CD4-positive, alpha-beta T cell (primary cell): ENCODE measurements at regions of chr15 and their contacts with region 1.

Region 1: DNA sequence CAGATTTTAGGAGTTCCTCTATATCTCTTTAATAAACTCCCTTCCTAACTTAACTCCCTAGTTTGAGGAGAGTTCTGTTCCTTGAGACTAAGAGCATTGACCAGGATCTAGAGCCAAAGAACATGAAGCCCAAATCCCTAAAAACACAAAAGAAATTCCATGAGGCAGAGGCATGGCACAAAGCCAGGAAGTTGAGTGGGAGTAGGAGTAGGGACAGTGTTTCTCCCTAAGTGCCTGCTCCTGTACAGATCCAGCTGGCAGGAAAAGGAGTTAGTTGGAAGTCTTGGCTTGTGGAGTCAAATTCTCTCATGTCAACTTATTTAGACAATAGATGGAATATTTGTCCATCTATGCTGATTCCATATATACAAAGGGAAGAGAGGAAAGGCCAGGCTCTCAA is 11.4 kb downstream of the ACTC1 start:
- DNase-seq: no peak
- ATAC-seq: no peak
- H3K4me3 ChIP-seq: no peak overlapping the region
- H3K4me3 Mint-ChIP-seq: no peak overlapping the region
- H3K27ac ChIP-seq: no peak overlapping the region
- H3K27ac Mint-ChIP-seq: no peak overlapping the region
- H3K4me1 ChIP-seq: no peaks in the 10 kb centered on the region
- H3K4me1 Mint-ChIP-seq: no peaks in the 10 kb centered on the region
- H3K27me3 ChIP-seq: peaks cover 3 to 14% of the 10 kb centered on the region in 2 experiments
- H3K27me3 Mint-ChIP-seq: peaks cover 52% of the 10 kb centered on the region
- CTCF ChIP-seq: no peak

Region 2: DNA sequence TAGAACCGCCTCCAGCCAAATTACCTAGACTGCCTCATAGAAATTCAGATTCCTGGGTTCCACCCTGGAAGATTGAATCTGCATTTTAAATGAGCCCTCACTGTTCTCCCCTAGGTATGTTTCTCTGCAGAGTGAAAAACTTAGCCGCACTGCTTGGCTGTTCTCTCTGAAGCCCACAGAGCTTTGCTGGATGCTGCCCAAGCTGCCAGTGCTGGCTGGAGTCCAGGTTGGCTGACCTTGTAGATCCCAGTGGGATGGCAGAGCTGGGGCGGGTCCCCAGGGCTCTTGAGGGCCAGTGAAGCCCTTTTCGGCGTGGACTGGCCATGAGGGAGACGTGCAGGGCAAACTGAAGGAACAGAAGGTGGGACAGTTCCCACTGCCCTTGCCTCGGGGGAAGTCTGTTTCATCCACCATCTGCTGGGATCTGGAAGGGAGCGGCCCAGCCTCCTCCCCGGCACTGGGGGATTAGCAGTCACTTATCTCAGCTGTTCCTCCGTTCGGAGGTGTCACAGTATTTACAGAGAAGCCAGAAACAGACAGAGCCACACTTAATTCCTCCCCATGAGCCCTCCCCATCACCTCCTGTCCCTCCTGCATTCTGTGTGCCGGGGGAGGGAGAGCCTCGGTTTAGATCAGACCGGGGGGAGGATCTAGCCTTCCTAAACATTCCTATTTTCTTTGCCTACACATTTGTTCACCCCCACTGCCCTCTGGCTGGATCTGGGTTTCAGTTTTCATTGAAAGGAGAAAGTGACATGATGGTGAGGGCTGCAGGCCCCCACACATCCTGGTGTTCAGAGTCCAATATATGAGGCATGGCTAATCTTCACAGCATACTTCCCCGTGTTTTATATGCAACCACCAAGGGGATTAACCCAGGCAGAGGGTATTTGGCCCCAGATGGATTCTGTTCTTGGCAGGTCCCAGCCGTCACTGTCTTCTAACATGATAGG is 15.4 kb after region 1 on chr15:
- CTCF ChIA-PET with region 1: no interaction called
- POLR2A ChIA-PET with region 1: no interaction called
- intact Hi-C with region 1: no loop called
- DNase-seq: no peak
- ATAC-seq: no peak
- H3K4me3 ChIP-seq: no peak overlapping the region
- H3K4me3 Mint-ChIP-seq: no peak overlapping the region
- H3K27ac ChIP-seq: no peak overlapping the region
- H3K27ac Mint-ChIP-seq: no peak overlapping the region
- H3K4me1 ChIP-seq: no peaks in the 10 kb centered on the region
- H3K4me1 Mint-ChIP-seq: no peaks in the 10 kb centered on the region
- H3K27me3 ChIP-seq: peaks cover 27% of the 10 kb centered on the region in 2 experiments
- H3K27me3 Mint-ChIP-seq: peaks cover 48% of the 10 kb centered on the region
- CTCF ChIP-seq: no peak

Region 3: GRCh38 chr15:34841262-34841725 is 57.3 kb after region 1 on chr15:
- CTCF ChIA-PET with region 1: no interaction called
- POLR2A ChIA-PET with region 1: no interaction called
- intact Hi-C with region 1: loop called in 1 of 2 experiments (anchors 10 kb)
- DNase-seq: no peak
- ATAC-seq: no peak
- H3K4me3 ChIP-seq: no peak overlapping the region
- H3K4me3 Mint-ChIP-seq: no peak overlapping the region
- H3K27ac ChIP-seq: no peak overlapping the region
- H3K27ac Mint-ChIP-seq: no peak overlapping the region
- H3K4me1 ChIP-seq: no peaks in the 10 kb centered on the region
- H3K4me1 Mint-ChIP-seq: no peaks in the 10 kb centered on the region
- H3K27me3 ChIP-seq: peaks cover 0 to 5% of the 10 kb centered on the region in 2 experiments
- H3K27me3 Mint-ChIP-seq: no peaks in the 10 kb centered on the region
- CTCF ChIP-seq: no peak

Region 4: GRCh38 chr15:34865531-34865930 is 81.5 kb after region 1 on chr15:
- CTCF ChIA-PET with region 1: no interaction called
- POLR2A ChIA-PET with region 1: no interaction called
- intact Hi-C with region 1: no loop called
- DNase-seq: no peak
- ATAC-seq: no peak
- H3K4me3 ChIP-seq: no peak overlapping the region
- H3K4me3 Mint-ChIP-seq: no peak overlapping the region
- H3K27ac ChIP-seq: no peak overlapping the region
- H3K27ac Mint-ChIP-seq: no peak overlapping the region
- H3K4me1 ChIP-seq: no peaks in the 10 kb centered on the region
- H3K4me1 Mint-ChIP-seq: no peaks in the 10 kb centered on the region
- H3K27me3 ChIP-seq: no peaks in the 10 kb centered on the region
- H3K27me3 Mint-ChIP-seq: no peaks in the 10 kb centered on the region
- CTCF ChIP-seq: no peak